SK-N-SH (cell line): ENCODE measurements at regions of chr17 and their contacts with region 1.

Region 1: GRCh38 chr17:74748529-74749365 is at the start of gene NHERF1:
- DNase-seq: peak; percentile 100
- H3K4me3 ChIP-seq: peak within 1 kb of the TSS; percentile 90 to 97
- H3K27ac ChIP-seq: peak within 1 kb of the TSS in 1 of 2 experiments; percentile 77; a peak in 2 of 4 replicates
- H3K4me1 ChIP-seq: peaks cover 0 to 29% of the 10 kb centered on the region in 2 experiments; a peak in 1 of 4 replicates
- H3K27me3 ChIP-seq: no peaks in the 10 kb centered on the region
- CTCF ChIP-seq: peak; percentile 36
- EP300 ChIP-seq: peak in 1 of 2 experiments; percentile 30; a peak in 1 of 4 replicates
- RAD21 ChIP-seq: peak; percentile 54
- polyA plus RNA-seq, gene NHERF1: 26.9 and 40.1 TPM in 2 replicates

Region 2: GRCh38 chr17:74697515-74697914 is 51.2 kb before region 1 on chr17:
- CTCF ChIA-PET with region 1: interaction called, 12 read pairs
- POLR2A ChIA-PET with region 1: no interaction called
- DNase-seq: no peak
- H3K4me3 ChIP-seq: no peak overlapping the region
- H3K27ac ChIP-seq: no peak overlapping the region
- H3K4me1 ChIP-seq: no peaks in the 10 kb centered on the region
- H3K27me3 ChIP-seq: no peaks in the 10 kb centered on the region
- CTCF ChIP-seq: no peak
- EP300 ChIP-seq: no peak
- RAD21 ChIP-seq: no peak

Region 3: DNA sequence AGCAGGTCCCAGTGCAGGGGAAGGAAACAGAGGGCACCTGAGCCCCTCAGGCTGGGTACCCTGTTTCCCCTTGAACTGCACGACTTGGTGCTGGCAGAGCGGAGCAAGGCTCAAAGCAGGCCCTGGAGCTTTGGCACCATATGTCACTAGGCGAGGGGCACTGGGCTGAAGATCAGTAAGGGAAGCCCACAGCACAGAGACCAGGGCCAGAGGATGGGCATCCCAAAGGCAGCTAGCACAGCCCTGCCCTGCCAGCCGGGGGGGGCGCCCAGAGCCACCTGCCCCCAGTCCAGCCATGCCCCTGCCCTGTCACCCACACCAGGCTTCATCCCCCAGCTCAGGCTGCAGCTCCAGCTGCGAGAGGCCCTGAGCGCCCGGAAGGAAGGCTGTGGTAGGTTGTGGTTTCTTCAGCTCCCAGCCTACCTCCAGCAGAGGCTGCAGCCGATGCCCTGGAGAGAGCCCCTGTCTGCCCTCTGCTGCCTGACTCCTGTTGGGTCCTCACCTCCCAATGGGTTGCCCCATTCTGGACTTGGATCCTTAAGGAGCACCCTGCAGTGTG is 10.6 kb after region 1 on chr17:
- CTCF ChIA-PET with region 1: interaction called, 1,361 read pairs
- POLR2A ChIA-PET with region 1: interaction called, 19 read pairs
- DNase-seq: peak; percentile 38
- H3K4me3 ChIP-seq: no peak overlapping the region
- H3K27ac ChIP-seq: peak overlapping the region in 1 of 2 experiments; percentile 94; a peak in 2 of 4 replicates
- H3K4me1 ChIP-seq: peaks cover 45 to 68% of the 10 kb centered on the region in 2 experiments; a peak in 3 of 4 replicates
- H3K27me3 ChIP-seq: no peaks in the 10 kb centered on the region
- CTCF ChIP-seq: no peak
- EP300 ChIP-seq: no peak
- RAD21 ChIP-seq: no peak

Region 4: DNA sequence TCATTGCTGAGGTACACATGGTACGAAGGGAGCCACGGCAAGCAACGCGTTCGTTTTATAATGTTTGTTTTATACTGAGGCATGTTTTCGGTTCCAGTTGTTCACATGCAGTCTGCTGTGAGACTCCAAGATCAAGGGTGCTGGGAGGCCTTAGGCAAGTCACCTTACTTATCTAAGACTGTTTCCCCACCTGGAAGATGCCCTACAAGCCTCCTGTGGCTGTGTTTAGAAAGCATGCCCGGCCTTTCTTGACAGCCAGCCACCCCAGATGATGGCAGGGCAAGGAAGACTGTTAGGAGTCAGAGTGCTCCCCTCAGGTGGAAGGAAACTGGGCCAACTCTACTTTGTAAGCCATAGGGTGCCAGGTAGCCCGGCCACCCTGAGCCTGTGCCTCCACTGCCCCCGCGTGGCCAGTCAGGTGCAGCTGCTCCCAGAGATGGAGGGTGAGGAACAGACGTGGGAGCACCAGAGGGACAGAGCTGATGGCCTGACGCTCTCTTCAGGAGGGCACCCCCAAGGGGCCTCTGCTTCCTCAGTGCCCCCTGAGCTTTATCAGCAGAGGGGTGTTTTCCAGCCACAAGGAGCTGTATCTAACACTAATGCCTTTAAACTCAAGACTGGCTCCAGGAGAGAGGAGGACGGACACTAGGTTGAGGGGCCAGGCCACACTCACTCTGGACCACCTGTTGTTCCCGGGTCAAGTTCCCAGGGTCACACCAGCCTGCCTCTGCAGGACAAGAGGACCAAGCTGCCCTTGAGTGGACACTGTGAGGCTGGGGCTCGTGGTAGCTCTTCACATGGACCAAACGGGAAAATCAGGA is 22.0 kb after region 1 on chr17:
- CTCF ChIA-PET with region 1: interaction called, 1,361 read pairs
- POLR2A ChIA-PET with region 1: interaction called, 20 read pairs
- DNase-seq: peak; percentile 91
- H3K4me3 ChIP-seq: no peak overlapping the region
- H3K27ac ChIP-seq: no peak overlapping the region
- H3K4me1 ChIP-seq: peaks cover 23 to 29% of the 10 kb centered on the region in 2 experiments; a peak in 3 of 4 replicates
- H3K27me3 ChIP-seq: no peaks in the 10 kb centered on the region
- CTCF ChIP-seq: peak; percentile 85
- EP300 ChIP-seq: no peak
- RAD21 ChIP-seq: peak; percentile 98

Region 5: GRCh38 chr17:74776044-74776977 is 27.6 kb after region 1 on chr17 and contains the start of gene NAT9:
- CTCF ChIA-PET with region 1: interaction called, 1,361 read pairs
- POLR2A ChIA-PET with region 1: interaction called, 20 read pairs
- DNase-seq: peak; percentile 100
- H3K4me3 ChIP-seq: peak within 1 kb of the TSS; percentile 87 to 90
- H3K27ac ChIP-seq: peak within 1 kb of the TSS; percentile 72 to 81
- H3K4me1 ChIP-seq: peaks cover 13 to 16% of the 10 kb centered on the region in 2 experiments; a peak in 3 of 4 replicates
- H3K27me3 ChIP-seq: no peaks in the 10 kb centered on the region
- CTCF ChIP-seq: no peak
- EP300 ChIP-seq: no peak
- RAD21 ChIP-seq: no peak
- polyA plus RNA-seq, gene NAT9: 117 and 190 TPM in 2 replicates

Region 6: DNA sequence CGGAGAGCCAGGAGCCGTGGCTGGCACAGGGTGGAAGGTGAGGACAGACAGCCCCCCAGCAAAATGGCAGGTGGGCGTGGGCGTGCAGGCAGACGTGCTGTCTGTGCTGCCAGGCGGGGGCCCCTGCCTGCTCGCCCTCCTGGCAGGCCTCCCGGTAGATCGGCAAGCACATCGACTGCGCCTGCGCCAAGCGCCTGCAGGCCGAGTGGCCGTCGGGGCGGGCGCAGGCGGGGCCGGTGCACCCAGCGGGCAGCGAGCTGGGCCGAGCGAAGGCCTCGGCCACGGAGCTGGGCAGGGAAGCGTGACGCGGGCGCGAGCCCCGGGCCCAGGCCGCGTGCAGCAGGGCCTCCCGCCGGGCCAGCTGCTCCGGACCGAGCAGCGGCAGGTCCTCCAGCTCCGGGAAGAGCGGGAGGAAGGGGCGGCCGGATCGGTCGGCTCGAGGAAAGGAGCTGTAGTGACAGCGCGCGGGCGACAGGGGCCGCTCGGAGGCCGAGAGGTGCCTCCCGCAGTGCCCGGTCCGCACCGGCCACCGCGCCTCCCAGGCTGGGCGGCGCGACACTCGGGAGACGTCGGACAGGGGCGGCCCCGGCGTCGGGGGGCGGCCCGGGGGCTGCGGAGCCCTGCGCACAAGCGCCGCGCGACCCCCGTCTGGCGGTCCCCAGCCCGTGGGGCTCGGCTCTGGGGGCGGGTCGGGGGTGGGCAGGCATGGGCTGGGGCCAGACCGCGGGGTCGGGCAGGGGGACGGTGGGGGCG is 94.0 kb after region 1 on chr17:
- CTCF ChIA-PET with region 1: interaction called, 16 read pairs
- POLR2A ChIA-PET with region 1: no interaction called
- DNase-seq: peak; percentile 99
- H3K4me3 ChIP-seq: peak overlapping the region; percentile 50 to 51
- H3K27ac ChIP-seq: no peak overlapping the region
- H3K4me1 ChIP-seq: peaks cover 0 to 16% of the 10 kb centered on the region in 2 experiments; a peak in 1 of 4 replicates
- H3K27me3 ChIP-seq: no peaks in the 10 kb centered on the region
- CTCF ChIP-seq: peak; percentile 56
- EP300 ChIP-seq: no peak
- RAD21 ChIP-seq: peak; percentile 69

Region 7: GRCh38 chr17:74864866-74865395 is 116.2 kb after region 1 on chr17:
- CTCF ChIA-PET with region 1: interaction called, 191 read pairs
- POLR2A ChIA-PET with region 1: no interaction called
- DNase-seq: peak; percentile 93
- H3K4me3 ChIP-seq: no peak overlapping the region; a peak in 1 of 4 replicates
- H3K27ac ChIP-seq: no peak overlapping the region
- H3K4me1 ChIP-seq: peaks cover 0 to 10% of the 10 kb centered on the region in 2 experiments; a peak in 2 of 4 replicates
- H3K27me3 ChIP-seq: peaks cover 18% of the 10 kb centered on the region
- CTCF ChIP-seq: peak; percentile 99
- EP300 ChIP-seq: no peak
- RAD21 ChIP-seq: peak; percentile 99

Region 8: GRCh38 chr17:75205037-75205792 is 456.5 kb after region 1 on chr17 and contains the start of gene NUP85:
- CTCF ChIA-PET with region 1: no interaction called
- POLR2A ChIA-PET with region 1: no interaction called
- DNase-seq: peak; percentile 100
- H3K4me3 ChIP-seq: peak within 1 kb of the TSS; percentile 70 to 87
- H3K27ac ChIP-seq: peak within 1 kb of the TSS; percentile 97 to 98
- H3K4me1 ChIP-seq: peaks cover 4 to 6% of the 10 kb centered on the region in 2 experiments; a peak in 1 of 4 replicates
- H3K27me3 ChIP-seq: no peaks in the 10 kb centered on the region
- CTCF ChIP-seq: no peak
- EP300 ChIP-seq: no peak
- RAD21 ChIP-seq: no peak
- polyA plus RNA-seq, gene NUP85: 80.5 and 99.8 TPM in 2 replicates